Heart right ventricle (tissue), 16 donors: ENCODE measurements at regions of chr19 and their contacts with region 1.

Region 1: GRCh38 chr19:13976446-13976845 is 24.1 kb downstream of the DCAF15 start:
- DNase-seq: no peak
- ATAC-seq: peak in 7 of 8 donors; percentile 3 to 72 (median 54)
- H3K4me3 ChIP-seq: no peak overlapping the region
- H3K27ac ChIP-seq: peak overlapping the region in 9 of 10 donors; percentile 52 to 89 (median 78)
- H3K4me1 ChIP-seq: peaks cover 6 to 45% (median 19%) of the 10 kb centered on the region in 9 donors
- H3K27me3 ChIP-seq: no peaks in the 10 kb centered on the region
- CTCF ChIP-seq: no peak

Region 2: GRCh38 chr19:14006243-14006765 is 29.9 kb after region 1 on chr19 and contains the start of gene RFX1:
- intact Hi-C with region 1: loop called in 1 of 10 experiments (anchors 2 kb)
- DNase-seq: peak; percentile 100
- ATAC-seq: peak; percentile 86 to 93 (median 90)
- H3K4me3 ChIP-seq: peak within 1 kb of the TSS; percentile 54 to 94 (median 76)
- H3K27ac ChIP-seq: peak within 1 kb of the TSS; percentile 95 to 100 (median 99)
- H3K4me1 ChIP-seq: peaks cover 11 to 46% (median 35%) of the 10 kb centered on the region in 9 donors
- H3K27me3 ChIP-seq: no peaks in the 10 kb centered on the region
- CTCF ChIP-seq: no peak
- total RNA-seq, gene RFX1: 10.4 to 15.8 (median 12.0) TPM